ENCODE measurements at regions of chr16 and their contacts with region 1.

Region 1: GRCh38 chr16:35305476-35305875 is 1846.1 kb downstream of the TP53TG3F start:
- DNase-seq: peak; percentile 85
- H3K4me3 ChIP-seq: no peak overlapping the region
- H3K27ac ChIP-seq: peak overlapping the region; percentile 74
- H3K4me1 ChIP-seq: peaks cover 50% of the 10 kb centered on the region
- H3K27me3 ChIP-seq: no peaks in the 10 kb centered on the region
- CTCF ChIP-seq: no peak

Region 2: DNA sequence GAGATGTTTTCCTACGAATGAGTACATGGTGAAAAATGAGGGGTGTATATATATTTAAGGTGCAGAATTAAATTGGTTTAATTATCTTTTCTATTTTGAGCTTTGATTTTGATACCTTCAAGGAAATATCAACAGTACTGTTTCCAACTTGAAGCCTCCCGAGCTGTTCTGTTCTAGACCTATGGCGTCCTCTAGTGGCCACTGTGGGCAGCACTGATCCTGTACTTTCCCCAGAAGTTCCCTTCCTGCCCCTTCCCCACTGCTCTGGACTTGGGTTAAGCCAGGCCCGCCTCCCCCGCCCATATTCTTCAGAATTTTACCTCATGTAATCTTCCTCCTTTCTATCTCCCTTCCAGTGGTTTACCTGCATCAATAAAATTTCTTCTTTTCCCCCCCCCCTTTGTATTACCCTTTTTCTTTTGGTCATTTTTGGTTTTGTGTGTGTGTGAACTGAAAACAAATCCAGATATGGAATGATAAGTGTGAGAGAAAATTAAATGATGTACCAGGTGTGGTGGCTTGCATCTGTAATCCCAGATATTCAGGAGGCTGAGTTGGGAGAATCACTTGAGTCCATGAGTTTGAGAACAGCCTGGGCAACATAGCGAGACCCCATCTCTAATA is 202.6 kb before region 1 on chr16:
- CTCF ChIA-PET with region 1: no interaction called
- dilution Hi-C with region 1: no loop called
- in situ Hi-C with region 1: no loop called
- intact Hi-C with region 1: no loop called
- DNase-seq: no peak
- H3K4me3 ChIP-seq: no peak overlapping the region
- H3K27ac ChIP-seq: no peak overlapping the region
- H3K4me1 ChIP-seq: no peaks in the 10 kb centered on the region
- H3K27me3 ChIP-seq: no peaks in the 10 kb centered on the region
- CTCF ChIP-seq: peak; percentile 44 to 76

Region 3: DNA sequence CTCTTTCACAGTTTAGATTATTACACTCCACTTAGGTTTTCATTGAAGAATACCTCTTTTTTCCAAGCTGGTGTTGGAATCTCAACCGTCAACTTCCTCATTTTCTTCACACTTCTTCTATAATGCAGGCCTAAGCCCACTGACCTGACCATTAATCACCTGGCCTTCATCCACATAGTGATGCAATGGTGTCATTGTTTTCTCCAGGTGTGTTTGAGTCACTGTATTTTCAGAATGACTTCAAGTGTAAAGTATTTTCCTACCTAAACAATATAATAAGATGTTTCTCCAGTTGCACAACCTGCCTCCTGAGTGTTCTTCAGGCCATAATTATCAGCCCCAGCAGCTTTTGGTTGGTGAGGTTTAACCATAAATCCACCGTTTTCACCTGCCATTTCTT is 171.0 kb before region 1 on chr16:
- CTCF ChIA-PET with region 1: no interaction called
- dilution Hi-C with region 1: no loop called
- in situ Hi-C with region 1: no loop called
- intact Hi-C with region 1: loop called (anchors 1 kb)
- DNase-seq: peak; percentile 95
- H3K4me3 ChIP-seq: no peak overlapping the region
- H3K27ac ChIP-seq: peak overlapping the region; percentile 78
- H3K4me1 ChIP-seq: peaks cover 21% of the 10 kb centered on the region
- H3K27me3 ChIP-seq: no peaks in the 10 kb centered on the region
- CTCF ChIP-seq: no peak

Region 4: GRCh38 chr16:35207059-35207999 is 98.1 kb before region 1 on chr16:
- CTCF ChIA-PET with region 1: no interaction called
- dilution Hi-C with region 1: loop called (anchors 5 kb)
- in situ Hi-C with region 1: no loop called
- intact Hi-C with region 1: loop called (anchors 5 kb)
- DNase-seq: no peak
- H3K4me3 ChIP-seq: no peak overlapping the region
- H3K27ac ChIP-seq: no peak overlapping the region
- H3K4me1 ChIP-seq: no peaks in the 10 kb centered on the region
- H3K27me3 ChIP-seq: no peaks in the 10 kb centered on the region
- CTCF ChIP-seq: no peak

Region 5: GRCh38 chr16:35365675-35366074 is 60.2 kb after region 1 on chr16:
- CTCF ChIA-PET with region 1: interaction called, 6 read pairs
- dilution Hi-C with region 1: no loop called
- in situ Hi-C with region 1: no loop called
- intact Hi-C with region 1: loop called (anchors 2 kb)
- DNase-seq: peak; percentile 30
- H3K4me3 ChIP-seq: no peak overlapping the region
- H3K27ac ChIP-seq: no peak overlapping the region
- H3K4me1 ChIP-seq: peaks cover 5% of the 10 kb centered on the region
- H3K27me3 ChIP-seq: no peaks in the 10 kb centered on the region
- CTCF ChIP-seq: no peak

Region 6: DNA sequence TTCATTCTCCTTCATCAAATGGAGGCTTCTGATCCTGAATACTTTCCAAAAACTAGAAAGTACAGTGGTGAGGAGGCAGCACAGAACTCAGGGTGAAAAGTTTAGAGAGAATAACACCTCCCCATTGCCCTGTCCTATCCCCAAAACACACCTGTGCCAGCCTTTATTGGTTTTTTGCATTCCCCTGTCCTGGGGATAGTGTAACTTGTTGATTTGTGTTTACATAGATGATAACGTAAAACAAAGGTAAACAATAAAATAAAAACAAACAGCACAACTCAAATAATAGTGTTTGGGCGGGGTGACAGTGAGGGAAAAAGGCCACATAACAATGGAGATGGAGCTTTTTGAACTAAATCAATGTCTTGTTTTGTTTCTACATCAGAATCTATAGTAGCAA is 71.7 kb after region 1 on chr16:
- CTCF ChIA-PET with region 1: no interaction called
- dilution Hi-C with region 1: loop called (anchors 5 kb)
- in situ Hi-C with region 1: no loop called
- intact Hi-C with region 1: no loop called
- DNase-seq: no peak
- H3K4me3 ChIP-seq: no peak overlapping the region
- H3K27ac ChIP-seq: no peak overlapping the region
- H3K4me1 ChIP-seq: no peaks in the 10 kb centered on the region
- H3K27me3 ChIP-seq: no peaks in the 10 kb centered on the region
- CTCF ChIP-seq: no peak

Region 7: DNA sequence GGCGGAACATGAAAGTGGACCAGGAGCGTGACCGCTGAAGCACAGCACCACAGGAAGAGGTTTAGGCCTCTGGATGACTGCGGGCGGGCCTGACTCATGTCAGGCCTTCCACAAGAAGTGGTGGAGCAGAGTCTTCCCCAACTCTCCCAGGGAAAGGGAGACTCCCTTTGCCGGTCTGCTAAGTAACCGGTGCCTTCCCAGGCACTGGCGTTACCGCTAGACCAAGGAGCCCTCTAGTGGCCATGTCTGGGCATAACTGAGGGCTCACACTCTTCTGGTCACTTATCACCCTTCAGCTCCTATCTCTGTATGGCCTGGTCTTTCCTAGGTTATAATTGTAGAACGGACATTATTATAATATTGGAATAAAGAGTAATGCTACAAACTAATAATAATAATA is 85.9 kb after region 1 on chr16:
- CTCF ChIA-PET with region 1: no interaction called
- dilution Hi-C with region 1: no loop called
- in situ Hi-C with region 1: no loop called
- intact Hi-C with region 1: loop called (anchors 5 kb)
- DNase-seq: peak; percentile 29
- H3K4me3 ChIP-seq: no peak overlapping the region
- H3K27ac ChIP-seq: no peak overlapping the region
- H3K4me1 ChIP-seq: no peaks in the 10 kb centered on the region
- H3K27me3 ChIP-seq: no peaks in the 10 kb centered on the region
- CTCF ChIP-seq: peak; percentile 60 to 88

Region 8: DNA sequence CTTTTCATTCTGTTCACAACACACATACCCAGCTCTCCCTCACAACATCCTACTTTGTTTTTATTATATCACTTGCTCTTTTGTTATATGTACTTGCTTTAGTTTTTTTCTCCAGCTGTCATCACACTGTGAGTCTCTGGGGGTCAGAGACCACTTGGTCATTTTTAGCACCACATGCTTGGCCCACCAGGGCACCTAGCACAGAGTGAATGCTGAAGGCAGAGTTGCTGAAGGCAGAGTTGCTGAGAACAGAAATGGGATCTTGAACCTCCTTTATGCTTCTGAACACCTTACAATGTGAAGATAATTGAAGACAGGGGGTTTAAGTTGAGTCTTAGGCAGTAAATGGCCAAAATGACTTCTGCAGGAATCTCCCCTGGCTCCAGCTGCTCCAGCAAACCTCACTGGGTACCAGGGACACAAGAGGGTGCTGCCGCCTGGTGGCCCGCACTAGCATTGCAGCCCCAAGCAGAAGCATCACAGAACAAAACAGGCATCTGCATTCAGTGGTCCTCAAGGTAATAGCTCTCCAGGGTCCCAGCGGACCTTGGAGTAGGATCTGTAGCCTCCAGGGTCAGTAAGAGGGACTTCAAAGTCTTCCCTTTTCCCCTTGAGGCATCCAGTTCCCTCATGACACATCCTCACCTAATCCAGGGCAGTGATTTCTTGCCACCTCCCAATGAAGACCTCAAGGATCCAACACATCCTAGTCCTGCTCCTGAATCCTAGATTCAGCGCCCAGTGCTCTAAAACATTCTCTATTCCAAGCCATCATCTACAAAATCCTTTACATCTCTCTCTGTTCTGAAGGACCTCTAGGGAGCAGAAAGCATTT is 126.6 kb after region 1 on chr16:
- CTCF ChIA-PET with region 1: no interaction called
- dilution Hi-C with region 1: no loop called
- in situ Hi-C with region 1: no loop called
- intact Hi-C with region 1: no loop called
- DNase-seq: no peak
- H3K4me3 ChIP-seq: no peak overlapping the region
- H3K27ac ChIP-seq: no peak overlapping the region
- H3K4me1 ChIP-seq: no peaks in the 10 kb centered on the region
- H3K27me3 ChIP-seq: no peaks in the 10 kb centered on the region
- CTCF ChIP-seq: peak; percentile 53 to 75

Measured in mammary epithelial cell (primary cell).